ENCODE measurements at regions of chr17 and their contacts with region 1.

Region 1: DNA sequence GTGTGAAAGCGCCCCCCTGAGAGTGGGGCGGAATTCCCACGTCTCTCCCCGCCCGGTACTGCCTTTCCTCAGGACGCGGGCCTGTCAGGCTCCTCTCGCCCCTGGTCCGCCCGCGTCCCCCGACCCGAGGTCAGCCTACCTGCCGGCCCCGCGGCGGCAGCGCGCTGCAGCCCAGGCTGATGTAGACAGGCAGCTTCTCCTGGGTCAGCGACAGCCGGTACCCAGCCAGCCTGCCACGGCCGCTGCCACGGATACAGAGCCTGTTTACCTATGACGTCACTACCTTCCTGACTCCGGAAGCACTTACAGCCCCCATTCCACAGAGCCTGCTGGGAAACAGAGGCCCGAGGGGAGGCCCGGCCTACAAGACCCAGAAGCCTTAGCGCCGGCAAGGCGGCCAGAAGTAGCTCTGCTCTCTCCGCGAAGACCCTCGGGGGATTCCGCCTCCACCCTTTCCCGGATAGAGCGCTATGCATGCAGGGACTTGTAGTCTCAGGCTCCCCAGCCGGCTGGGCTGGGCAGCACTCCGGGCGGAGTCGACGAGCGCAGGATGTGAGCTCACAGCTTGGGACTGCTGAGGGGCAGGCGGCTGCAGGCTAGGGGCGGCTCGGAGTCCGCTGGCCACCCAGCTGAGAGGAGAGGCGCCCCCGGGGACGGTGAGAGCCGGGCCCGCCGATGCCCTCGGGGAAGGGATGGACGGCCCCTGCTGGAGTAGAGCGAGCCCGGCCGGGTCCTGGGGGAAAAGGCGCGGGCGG is at the starts of genes IFT20 and TNFAIP1:
- DNase-seq: peak; percentile 100
- H3K4me3 ChIP-seq: peak within 1 kb of the TSS; percentile 97
- H3K27ac ChIP-seq: peak within 1 kb of the TSS; percentile 99
- H3K27me3 ChIP-seq: no peaks in the 10 kb centered on the region
- CTCF ChIP-seq: no peak
- polyA plus RNA-seq, gene IFT20: 43.5 and 67.1 TPM in 2 replicates
- polyA plus RNA-seq, gene TNFAIP1: 51.2 and 64.7 TPM in 2 replicates

Region 2: DNA sequence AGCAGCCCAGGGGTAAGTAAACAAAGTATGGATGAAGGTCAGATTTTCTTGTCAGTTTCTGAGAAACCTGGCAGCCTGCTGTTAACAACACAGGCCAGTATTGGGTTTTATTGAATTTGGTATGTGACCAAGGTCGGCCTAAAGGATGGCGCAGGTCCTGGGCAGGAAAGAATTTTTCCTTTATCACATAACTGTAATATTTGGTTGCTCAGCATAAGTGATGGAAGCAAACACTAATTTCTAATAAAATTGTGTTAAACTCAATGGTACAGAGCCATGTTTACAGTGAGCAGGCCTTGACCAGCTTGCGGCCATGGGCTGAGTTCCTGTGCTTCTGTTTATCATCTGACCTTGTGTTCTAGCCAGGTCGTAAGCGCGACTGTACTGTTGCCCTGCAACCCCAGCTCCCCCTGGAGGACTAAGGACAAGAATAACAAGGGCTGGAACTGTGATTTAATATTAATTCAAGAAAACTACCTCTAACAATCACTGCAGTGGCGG is 11.4 kb after region 1 on chr17:
- CTCF ChIA-PET with region 1: no interaction called
- POLR2A ChIA-PET with region 1: interaction called, 28 read pairs
- DNase-seq: no peak
- H3K4me3 ChIP-seq: no peak overlapping the region
- H3K27ac ChIP-seq: peak overlapping the region; percentile 89
- H3K27me3 ChIP-seq: no peaks in the 10 kb centered on the region
- CTCF ChIP-seq: peak; percentile 46

Region 3: DNA sequence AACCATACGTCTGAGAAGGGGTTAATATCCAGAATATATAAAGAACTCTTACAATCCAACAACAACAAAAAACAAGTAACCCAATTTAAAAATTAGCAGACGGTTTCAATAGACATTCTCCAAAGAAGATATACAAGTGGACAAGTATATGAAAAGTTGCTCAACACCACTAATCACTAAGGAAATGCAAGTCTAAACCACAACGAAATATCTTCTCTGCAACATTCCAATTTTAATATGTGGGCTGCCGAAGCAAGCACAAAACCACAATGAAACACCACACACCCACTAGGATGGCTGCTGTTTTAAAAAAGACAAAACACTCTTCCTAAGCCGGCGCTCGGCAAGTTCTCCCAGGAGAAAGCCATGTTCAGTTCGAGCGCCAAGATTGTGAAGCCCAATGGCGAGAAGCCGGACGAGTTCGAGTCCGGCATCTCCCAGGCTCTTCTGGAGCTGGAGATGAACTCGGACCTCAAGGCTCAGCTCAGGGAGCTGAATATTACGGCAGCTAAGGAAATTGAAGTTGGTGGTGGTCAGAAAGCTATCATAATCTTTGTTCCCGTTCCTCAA is 132.2 kb after region 1 on chr17:
- CTCF ChIA-PET with region 1: no interaction called
- POLR2A ChIA-PET with region 1: no interaction called
- DNase-seq: peak; percentile 6
- H3K4me3 ChIP-seq: no peak overlapping the region
- H3K27ac ChIP-seq: no peak overlapping the region
- H3K27me3 ChIP-seq: peaks cover 36% of the 10 kb centered on the region
- CTCF ChIP-seq: no peak